Colonic mucosa (tissue), 4 donors: ENCODE measurements at regions of chr2 and their contacts with region 1.

Region 1: GRCh38 chr2:237474931-237475703 is 11.9 kb upstream of the MLPH start:
- DNase-seq: peak; percentile 80
- H3K4me3 ChIP-seq: peak overlapping the region; percentile 60
- H3K27ac ChIP-seq: peak overlapping the region; percentile 81
- H3K4me1 ChIP-seq: no peaks in the 10 kb centered on the region
- H3K27me3 ChIP-seq: no peaks in the 10 kb centered on the region
- CTCF ChIP-seq: peak; percentile 87

Region 2: GRCh38 chr2:237154082-237154638 is 321.0 kb before region 1 on chr2:
- intact Hi-C with region 1: loop called (anchors 10 kb)
- DNase-seq: no peak
- H3K4me3 ChIP-seq: no peak overlapping the region
- H3K27ac ChIP-seq: no peak overlapping the region
- H3K4me1 ChIP-seq: no peaks in the 10 kb centered on the region
- H3K27me3 ChIP-seq: no peaks in the 10 kb centered on the region
- CTCF ChIP-seq: peak; percentile 33

Region 3: GRCh38 chr2:237421542-237422116 is 53.5 kb before region 1 on chr2:
- intact Hi-C with region 1: loop called (anchors 5 kb)
- DNase-seq: peak; percentile 80
- H3K4me3 ChIP-seq: no peak overlapping the region
- H3K27ac ChIP-seq: no peak overlapping the region
- H3K4me1 ChIP-seq: no peaks in the 10 kb centered on the region
- H3K27me3 ChIP-seq: no peaks in the 10 kb centered on the region
- CTCF ChIP-seq: peak; percentile 66

Region 4: DNA sequence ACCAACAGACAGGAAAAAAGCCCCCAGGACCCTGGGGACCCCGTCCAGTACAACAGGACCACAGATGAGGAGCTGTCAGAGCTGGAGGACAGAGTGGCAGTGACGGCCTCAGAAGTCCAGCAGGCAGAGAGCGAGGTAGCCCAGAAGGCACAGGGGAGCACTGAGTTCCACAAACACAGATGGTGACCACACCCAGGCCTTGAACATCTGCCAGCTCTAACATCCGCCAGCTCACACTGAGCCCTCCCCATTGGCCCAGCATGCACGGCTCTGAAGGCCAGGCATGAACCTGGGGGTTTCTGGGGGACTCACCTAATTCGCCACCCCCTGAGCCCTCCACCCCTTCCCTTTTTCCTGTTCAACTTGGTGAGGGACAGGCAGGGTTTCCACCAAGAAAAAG is 65.7 kb after region 1 on chr2:
- intact Hi-C with region 1: no loop called
- DNase-seq: peak; percentile 86
- H3K4me3 ChIP-seq: no peak overlapping the region
- H3K27ac ChIP-seq: no peak overlapping the region
- H3K4me1 ChIP-seq: peaks cover 8% of the 10 kb centered on the region
- H3K27me3 ChIP-seq: no peaks in the 10 kb centered on the region
- CTCF ChIP-seq: no peak

Region 5: DNA sequence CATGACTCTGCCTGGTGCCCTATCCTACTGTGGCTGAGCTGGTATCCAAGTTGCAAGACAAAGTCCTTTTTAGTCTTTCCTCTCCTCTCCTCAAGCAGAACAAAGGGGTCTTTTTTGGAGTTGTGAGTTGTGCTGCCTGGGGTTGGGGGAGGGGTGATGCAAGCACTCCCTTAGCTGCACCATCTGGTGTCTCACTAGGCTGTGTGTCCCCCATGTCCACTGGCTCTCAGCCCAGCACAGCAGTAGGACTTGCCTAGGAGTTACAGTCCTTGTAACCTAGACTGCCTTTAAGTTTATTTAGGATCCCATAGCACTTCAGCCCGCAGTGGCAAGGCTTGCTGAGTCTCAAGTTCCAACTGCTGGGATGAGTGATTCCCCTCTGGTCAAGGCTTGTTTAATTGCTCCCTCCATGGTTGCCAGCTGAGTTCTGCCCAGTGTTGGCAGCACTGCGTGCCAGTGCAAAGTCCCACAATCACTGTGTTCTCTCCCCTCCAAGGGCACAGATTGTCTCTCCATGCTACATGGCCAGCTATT is 741.6 kb after region 1 on chr2:
- intact Hi-C with region 1: no loop called
- DNase-seq: no peak
- H3K4me3 ChIP-seq: no peak overlapping the region
- H3K27ac ChIP-seq: no peak overlapping the region
- H3K4me1 ChIP-seq: no peaks in the 10 kb centered on the region
- H3K27me3 ChIP-seq: no peaks in the 10 kb centered on the region
- CTCF ChIP-seq: no peak